ENCODE measurements at regions of chr6 and their contacts with region 1.

Region 1: GRCh38 chr6:79913369-79913768 is 34.0 kb downstream of the ELOVL4 start:
- DNase-seq: no peak
- ATAC-seq: no peak
- H3K4me3 ChIP-seq: no peak overlapping the region
- H3K27ac ChIP-seq: no peak overlapping the region
- H3K4me1 ChIP-seq: no peaks in the 10 kb centered on the region
- H3K27me3 ChIP-seq: peaks cover 11% of the 10 kb centered on the region
- CTCF ChIP-seq: no peak

Region 2: DNA sequence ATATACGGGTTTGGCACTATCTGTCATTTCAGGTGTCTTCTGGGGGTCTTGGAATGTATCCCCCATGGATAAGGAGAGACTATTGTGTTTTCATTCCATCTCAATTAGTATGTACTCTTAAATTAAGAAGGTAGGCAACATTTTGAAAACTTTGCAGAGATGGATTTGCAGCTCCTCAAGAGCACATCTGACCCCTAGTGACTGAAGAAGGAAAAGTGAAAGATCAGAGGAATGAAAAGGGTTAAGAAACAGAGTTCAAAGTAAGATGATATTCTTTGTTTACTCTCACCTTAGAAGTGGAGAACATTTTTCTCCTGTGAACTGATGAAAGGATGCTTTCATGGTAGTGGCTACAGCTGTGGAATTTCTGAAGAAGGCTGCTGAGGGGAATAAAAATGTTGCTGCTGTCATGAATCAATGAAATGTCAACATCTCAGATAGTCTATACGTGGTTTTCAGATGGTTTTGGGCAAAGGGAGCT is 240.7 kb before region 1 on chr6:
- CTCF ChIA-PET with region 1: interaction called, 10 read pairs
- POLR2A ChIA-PET with region 1: no interaction called
- in situ Hi-C with region 1: no loop called
- intact Hi-C with region 1: no loop called
- DNase-seq: peak; percentile 8
- ATAC-seq: peak; percentile 79; the same call in 1 of the 2 replicates
- H3K4me3 ChIP-seq: no peak overlapping the region
- H3K27ac ChIP-seq: peak overlapping the region; percentile 69
- H3K4me1 ChIP-seq: peaks cover 15% of the 10 kb centered on the region
- H3K27me3 ChIP-seq: no peaks in the 10 kb centered on the region
- CTCF ChIP-seq: peak; percentile 73; the same call in 1 of the 2 replicates